ENCODE measurements at regions of chr1 and their contacts with region 1.

Region 1: DNA sequence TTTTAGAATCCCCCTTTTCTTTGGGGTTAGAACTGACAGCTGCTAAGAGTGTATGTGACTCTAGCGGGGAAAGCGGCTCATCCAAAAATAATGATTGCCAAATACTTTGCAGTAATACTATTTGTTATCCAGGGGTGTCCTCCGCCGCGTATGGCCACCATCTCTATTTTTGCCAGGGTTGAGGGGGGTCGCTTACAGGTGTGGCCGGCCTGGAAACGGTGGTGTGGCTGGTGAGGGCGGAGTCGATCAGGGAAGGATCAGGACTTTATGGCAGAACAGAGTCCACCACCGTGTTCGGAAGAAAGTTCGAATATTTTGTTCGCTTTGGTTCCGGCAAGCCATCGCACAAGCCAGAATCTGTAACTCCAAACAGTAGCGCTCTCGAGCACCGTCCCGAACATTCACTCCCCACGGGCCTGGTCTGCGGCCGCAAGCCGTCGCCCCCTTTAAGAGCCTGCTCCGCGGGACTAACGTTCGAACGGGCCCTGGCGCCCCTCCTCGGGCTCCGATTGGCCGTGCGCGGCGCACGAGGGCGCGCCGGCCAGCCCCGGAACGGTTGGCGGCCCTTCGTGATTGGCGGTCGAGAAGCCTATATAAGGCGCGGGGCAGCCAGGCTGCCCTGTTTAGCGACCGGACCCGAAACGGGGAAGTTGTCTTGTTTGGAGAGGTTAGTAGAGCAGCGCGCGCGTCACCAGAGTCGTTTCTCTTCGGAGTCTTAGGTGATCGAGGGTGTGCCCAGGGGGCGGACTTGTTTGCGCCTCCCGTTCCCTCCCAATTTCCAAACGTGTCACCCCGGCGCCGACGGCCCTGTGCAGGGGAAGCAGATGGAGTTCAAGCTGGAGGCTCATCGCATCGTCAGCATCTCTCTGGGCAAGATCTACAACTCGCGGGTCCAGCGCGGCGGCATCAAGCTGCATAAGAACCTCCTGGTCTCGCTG is at the start of gene IER5:
- DNase-seq: peak; percentile 94 to 97 (median 95)
- H3K4me3 ChIP-seq: peak within 1 kb of the TSS; percentile 74
- H3K27ac ChIP-seq: peak within 1 kb of the TSS; percentile 53 to 66
- H3K4me1 ChIP-seq: no peaks in the 10 kb centered on the region
- H3K27me3 ChIP-seq: no peaks in the 10 kb centered on the region
- CTCF ChIP-seq: no peak
- EP300 ChIP-seq: no peak
- POLR2A ChIP-seq: peak; percentile 98
- total RNA-seq, gene IER5: 2.7 to 43.4 (median 6.8) TPM

Region 2: GRCh38 chr1:180954005-180954800 is 134.1 kb before region 1 on chr1:
- intact Hi-C with region 1: no loop called
- DNase-seq: peak; percentile 79 to 87 (median 85)
- H3K4me3 ChIP-seq: peak overlapping the region; percentile 68
- H3K27ac ChIP-seq: peak overlapping the region in 1 of 2 donors; percentile 62
- H3K4me1 ChIP-seq: peaks cover 4% of the 10 kb centered on the region
- H3K27me3 ChIP-seq: no peaks in the 10 kb centered on the region
- CTCF ChIP-seq: peak in 1 of 3 donors; percentile 55
- EP300 ChIP-seq: no peak
- POLR2A ChIP-seq: no peak

Region 3: GRCh38 chr1:181021811-181022434 is 66.4 kb before region 1 on chr1:
- intact Hi-C with region 1: loop called in 1 of 4 experiments (anchors 5 kb)
- DNase-seq: peak; percentile 64 to 73 (median 72)
- H3K4me3 ChIP-seq: peak overlapping the region; percentile 87
- H3K27ac ChIP-seq: peak overlapping the region; percentile 43 to 76
- H3K4me1 ChIP-seq: no peaks in the 10 kb centered on the region
- H3K27me3 ChIP-seq: no peaks in the 10 kb centered on the region
- CTCF ChIP-seq: no peak
- EP300 ChIP-seq: no peak
- POLR2A ChIP-seq: no peak

Region 4: GRCh38 chr1:181033799-181034451 is 54.4 kb before region 1 on chr1 and contains the start of gene MR1:
- intact Hi-C with region 1: loop called in 1 of 4 experiments (anchors 5 kb)
- DNase-seq: peak in 2 of 5 donors; percentile 27 to 46
- H3K4me3 ChIP-seq: peak within 1 kb of the TSS; percentile 46
- H3K27ac ChIP-seq: peak within 1 kb of the TSS; percentile 26 to 85
- H3K4me1 ChIP-seq: peaks cover 11% of the 10 kb centered on the region
- H3K27me3 ChIP-seq: no peaks in the 10 kb centered on the region
- CTCF ChIP-seq: peak in 1 of 3 donors; percentile 13
- EP300 ChIP-seq: no peak
- POLR2A ChIP-seq: peak; percentile 54
- total RNA-seq, gene MR1: 7.4 to 21.5 (median 15.5) TPM

Region 5: GRCh38 chr1:181479137-181479745 is 390.9 kb after region 1 on chr1:
- intact Hi-C with region 1: no loop called
- DNase-seq: peak in 2 of 5 donors; percentile 26 to 40
- H3K4me3 ChIP-seq: no peak overlapping the region
- H3K27ac ChIP-seq: no peak overlapping the region
- H3K4me1 ChIP-seq: no peaks in the 10 kb centered on the region
- H3K27me3 ChIP-seq: no peaks in the 10 kb centered on the region
- CTCF ChIP-seq: no peak
- EP300 ChIP-seq: no peak
- POLR2A ChIP-seq: no peak